Panc1 (cell line): ENCODE measurements at regions of chr3 and their contacts with region 1.

Region 1: DNA sequence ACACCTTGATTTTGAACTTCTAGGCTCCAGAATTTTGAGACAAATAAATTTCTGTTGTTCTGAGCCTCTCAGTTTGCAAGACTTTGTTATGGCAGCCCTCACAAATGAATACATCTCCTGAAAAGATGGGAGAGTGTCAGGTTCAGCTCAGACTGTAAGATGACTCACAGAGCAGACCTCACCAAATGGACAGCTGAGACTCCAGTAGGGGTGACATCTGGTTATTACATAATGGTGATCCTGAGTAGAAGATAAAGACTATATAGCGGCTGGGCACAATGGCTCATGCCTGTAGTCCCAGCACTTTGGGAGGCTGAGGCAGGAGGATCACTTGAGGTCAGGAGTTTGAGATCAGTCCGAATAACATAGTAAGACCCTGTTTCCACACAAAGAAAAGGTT is 26.2 kb upstream of the MTMR14 start:
- DNase-seq: no peak
- ATAC-seq: no peak
- H3K4me3 ChIP-seq: no peak overlapping the region
- H3K27ac ChIP-seq: no peak overlapping the region
- H3K4me1 ChIP-seq: no peaks in the 10 kb centered on the region
- H3K27me3 ChIP-seq: no peaks in the 10 kb centered on the region
- CTCF ChIP-seq: no peak

Region 2: DNA sequence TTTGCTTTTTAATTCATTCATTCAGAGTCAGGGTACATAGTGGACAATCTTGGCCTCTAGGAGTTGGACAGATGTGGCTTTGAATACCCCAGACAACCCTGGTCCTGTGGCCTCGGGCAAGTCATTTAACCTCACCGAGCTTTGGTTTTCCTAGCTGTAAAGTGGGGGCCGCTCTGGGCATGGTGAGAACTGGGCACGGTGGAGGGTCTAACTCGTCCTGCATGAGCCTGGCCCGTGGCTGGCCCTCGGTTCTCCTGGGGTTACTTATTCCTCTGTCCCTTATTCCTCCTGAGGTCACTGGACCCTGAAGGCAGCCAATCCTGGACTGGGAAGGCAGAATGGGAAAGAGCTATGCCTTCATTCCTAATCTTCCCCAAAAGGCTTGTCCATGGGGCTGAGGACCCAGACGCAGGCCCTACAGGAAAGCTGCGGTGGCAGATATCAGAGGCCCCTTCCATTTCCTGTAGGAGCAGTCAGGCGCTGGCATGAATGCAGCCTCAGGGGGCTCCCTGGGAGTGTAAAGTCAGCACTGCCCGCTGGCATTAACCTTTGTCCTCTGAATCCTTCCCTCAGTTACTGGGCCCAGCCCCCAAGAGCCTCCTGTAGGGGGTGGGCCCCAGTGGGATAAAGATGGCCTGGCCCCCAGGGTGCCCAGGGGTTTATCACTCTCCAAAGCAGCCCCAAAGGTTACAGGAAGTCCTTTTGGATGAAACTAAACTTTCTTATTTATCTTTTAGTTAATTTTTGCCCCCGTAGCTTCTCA is 715.6 kb after region 1 on chr3:
- CTCF ChIA-PET with region 1: no interaction called
- POLR2A ChIA-PET with region 1: interaction called, 13 read pairs
- in situ Hi-C with region 1: no loop called
- intact Hi-C with region 1: no loop called
- DNase-seq: no peak
- ATAC-seq: no peak
- H3K4me3 ChIP-seq: no peak overlapping the region
- H3K27ac ChIP-seq: no peak overlapping the region
- H3K4me1 ChIP-seq: no peaks in the 10 kb centered on the region
- H3K27me3 ChIP-seq: no peaks in the 10 kb centered on the region
- CTCF ChIP-seq: no peak